GM10248 (cell line): ENCODE measurements at regions of chr12 and their contacts with region 1.

Region 1: DNA sequence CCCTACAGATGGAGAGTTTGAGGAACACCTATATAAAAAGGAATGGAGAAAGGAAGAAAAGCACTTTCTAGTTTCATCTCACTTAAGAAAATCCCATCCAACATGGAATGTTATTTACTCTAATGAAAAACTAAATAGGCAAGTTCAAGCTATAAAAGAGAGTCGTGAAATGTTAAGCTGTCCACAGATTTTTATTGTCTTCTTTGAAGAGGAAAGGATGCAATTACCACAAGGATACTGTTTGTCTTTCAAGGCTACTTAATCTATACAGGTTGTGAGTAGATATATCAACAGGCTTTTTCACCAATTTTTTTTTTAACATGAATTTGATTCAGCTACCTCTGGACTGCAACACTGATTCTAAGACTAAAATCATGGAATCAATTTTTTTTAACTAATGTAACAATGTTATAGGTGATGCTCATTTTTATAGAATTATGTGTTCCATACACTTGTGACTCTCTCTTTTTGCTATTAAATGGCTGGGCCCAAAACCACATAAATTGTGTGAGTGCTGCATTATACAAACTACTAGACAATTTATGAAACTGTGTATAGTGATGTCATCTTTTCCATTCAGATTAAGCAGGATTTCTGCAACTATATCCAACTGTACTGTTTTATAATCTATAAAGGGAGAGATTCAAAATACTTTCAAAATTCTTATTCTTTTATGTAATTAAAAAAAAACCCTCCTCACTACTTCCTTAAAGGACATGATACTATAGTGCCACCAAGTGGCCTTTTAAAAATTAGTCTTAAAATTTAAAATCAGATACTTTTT is 26.8 kb upstream of the BMAL2 start:
- DNase-seq: no peak
- CTCF ChIP-seq: peak; percentile 31

Region 2: GRCh38 chr12:27034607-27035293 is 271.1 kb before region 1 on chr12:
- CTCF ChIA-PET with region 1: interaction called, 15 read pairs
- POLR2A ChIA-PET with region 1: interaction called, 3 read pairs
- DNase-seq: no peak
- CTCF ChIP-seq: no peak

Region 3: DNA sequence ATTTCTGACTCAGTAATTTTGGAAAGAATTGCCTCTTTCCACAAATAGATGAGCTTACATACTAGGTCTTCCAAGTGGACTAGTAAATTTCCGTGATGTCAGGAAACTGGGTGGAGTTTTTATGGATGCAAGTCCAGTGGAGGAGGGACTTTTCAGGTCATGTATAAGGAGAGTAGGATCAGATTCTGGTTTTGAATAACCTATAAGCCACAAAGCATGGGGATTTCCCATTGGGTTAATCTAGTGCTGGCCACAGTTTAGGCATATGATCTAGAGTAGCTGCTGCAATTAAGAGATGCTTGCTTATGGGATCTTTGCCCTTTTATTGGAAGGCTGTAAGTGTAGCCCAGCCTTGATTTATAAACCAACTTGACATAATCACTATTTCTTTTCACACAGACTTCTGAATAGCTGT is 28.0 kb before region 1 on chr12:
- CTCF ChIA-PET with region 1: interaction called, 28 read pairs
- POLR2A ChIA-PET with region 1: no interaction called
- DNase-seq: peak; percentile 45
- CTCF ChIP-seq: no peak

Region 4: DNA sequence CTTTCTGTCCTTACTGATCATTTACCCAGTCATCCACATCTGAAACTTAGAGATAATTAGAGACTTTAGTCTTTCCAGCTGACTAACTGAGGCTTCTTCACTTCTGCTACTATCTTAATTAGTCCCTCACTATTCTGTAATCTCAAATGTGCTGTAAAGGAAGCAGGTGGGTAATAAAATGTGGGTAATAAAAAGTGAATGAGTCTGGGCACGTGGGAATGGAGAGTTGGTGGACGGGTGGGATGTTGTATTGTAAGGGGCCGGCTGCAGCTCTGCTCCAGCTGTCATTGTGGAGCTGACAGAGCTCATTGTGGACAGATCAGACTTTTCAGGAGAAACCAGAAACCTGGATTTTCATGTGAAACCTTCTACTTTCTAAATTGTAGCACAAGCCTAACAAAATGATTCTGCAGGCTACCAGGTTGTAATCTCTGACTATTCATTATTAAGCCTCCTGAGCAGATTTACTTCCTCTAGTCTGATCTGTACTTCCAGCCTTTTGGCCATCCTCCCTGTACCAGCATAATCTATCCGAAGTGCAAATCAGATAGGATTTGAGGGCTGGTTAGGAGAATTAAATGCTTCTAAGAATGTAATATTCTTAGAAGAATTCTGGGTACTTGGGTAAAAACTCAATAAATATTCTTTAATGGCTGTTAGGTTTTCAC is 15.2 kb before region 1 on chr12:
- CTCF ChIA-PET with region 1: interaction called, 52 read pairs
- POLR2A ChIA-PET with region 1: no interaction called
- DNase-seq: no peak
- CTCF ChIP-seq: no peak

Region 5: DNA sequence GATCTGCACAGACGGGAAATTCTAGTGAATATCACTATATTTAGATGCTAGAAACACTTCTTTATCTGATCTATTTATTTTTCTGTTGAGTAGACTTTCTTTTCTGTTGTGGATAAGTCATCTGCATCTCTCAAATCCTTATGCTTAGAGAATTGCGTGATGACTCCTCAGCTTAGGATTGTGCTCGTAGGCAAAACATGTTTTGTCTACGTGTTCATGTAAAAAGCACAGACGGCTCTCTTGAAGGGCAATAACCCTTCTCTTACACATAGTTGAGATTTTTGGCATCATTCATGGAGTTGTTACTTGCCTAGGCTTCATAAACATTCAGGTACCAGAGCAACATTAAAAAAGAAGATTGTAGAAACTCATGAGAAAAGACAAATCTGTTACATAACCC is 236.8 kb after region 1 on chr12:
- CTCF ChIA-PET with region 1: no interaction called
- POLR2A ChIA-PET with region 1: no interaction called
- DNase-seq: no peak
- CTCF ChIP-seq: no peak